Activated naive CD4-positive, alpha-beta T cell treated with anti-CD3 and anti-CD28 coated beads, Interleukin-2, amount 10 ng/mL, durations not matched to agents 7 days and 5 days (primary cell): ENCODE measurements at regions of chr6 and their contacts with region 1.

Region 1: DNA sequence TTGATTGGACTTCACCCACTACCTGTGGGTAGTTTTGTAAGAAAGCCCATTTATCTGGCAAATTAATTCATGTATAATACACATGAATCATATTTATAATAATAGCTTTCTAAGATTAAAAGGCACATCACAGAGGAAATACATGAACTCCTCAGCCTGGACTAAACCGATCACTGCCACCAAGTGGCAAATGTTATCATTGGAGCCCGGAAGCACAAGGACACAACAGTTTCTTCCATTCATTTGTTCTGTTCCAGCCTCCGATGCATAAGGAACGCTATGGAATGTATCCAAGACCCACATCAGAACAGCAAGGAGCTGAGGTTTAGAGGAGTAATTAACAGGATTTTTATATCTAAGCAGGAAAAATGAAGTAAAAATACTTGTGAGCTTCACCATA is 13.9 kb upstream of the IPCEF1 start:
- DNase-seq: peak; percentile 32
- H3K4me3 Mint-ChIP-seq: no peak overlapping the region
- H3K27ac Mint-ChIP-seq: no peak overlapping the region
- H3K4me1 Mint-ChIP-seq: no peaks in the 10 kb centered on the region
- H3K27me3 Mint-ChIP-seq: no peaks in the 10 kb centered on the region

Region 2: DNA sequence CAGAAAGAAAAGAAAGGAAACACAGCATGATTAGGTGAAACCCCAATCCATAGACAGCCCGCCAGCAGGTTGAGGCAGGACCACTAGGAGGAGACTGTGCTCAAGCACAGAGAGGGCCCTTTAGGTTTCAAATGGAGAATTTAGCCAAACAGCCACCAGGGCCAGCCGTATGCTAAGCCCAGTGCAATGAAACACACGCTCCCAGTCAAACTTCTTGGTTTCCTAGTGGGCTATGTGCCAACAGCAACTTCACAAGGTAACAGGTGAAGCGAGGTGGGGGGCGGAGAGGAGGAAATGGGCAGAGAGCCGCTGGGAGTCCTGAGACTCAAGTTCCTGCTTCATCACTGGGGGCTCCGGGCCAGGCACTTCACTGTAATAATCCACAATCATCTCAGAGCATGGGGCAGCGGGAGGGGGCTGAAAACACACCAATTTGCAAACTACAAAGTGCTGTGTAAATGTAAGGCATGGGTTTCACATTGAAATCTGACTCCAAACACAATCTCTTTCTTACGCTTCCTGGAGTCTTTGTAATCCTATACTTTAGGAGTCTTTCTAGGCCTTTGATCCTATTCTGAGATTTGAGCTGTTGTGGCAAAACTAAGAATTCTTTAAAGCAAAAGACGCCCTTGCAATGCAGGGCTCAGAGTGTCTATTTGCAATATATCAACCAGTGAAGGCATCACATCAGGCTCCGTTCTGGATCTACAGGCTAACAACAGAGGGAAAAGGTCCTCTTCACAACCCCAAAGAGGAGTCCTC is 214.2 kb before region 1 on chr6:
- CTCF ChIA-PET with region 1: interaction called, 24 read pairs
- DNase-seq: peak; percentile 76
- H3K4me3 Mint-ChIP-seq: peak overlapping the region; percentile 71
- H3K27ac Mint-ChIP-seq: peak overlapping the region; percentile 89
- H3K4me1 Mint-ChIP-seq: peaks cover 39% of the 10 kb centered on the region
- H3K27me3 Mint-ChIP-seq: peaks cover under 1% of the 10 kb centered on the region